Common myeloid progenitor, CD34-positive (primary cell): ENCODE measurements at regions of chr2 and their contacts with region 1.

Region 1: GRCh38 chr2:143110758-143111428 is 18.3 kb upstream of the ARHGAP15 start:
- DNase-seq: peak; percentile 81 to 90 (median 88)
- H3K4me3 ChIP-seq: peak overlapping the region in 5 of 7 experiments; percentile 21 to 64 (median 43)
- H3K27ac ChIP-seq: peak overlapping the region in 1 of 2 experiments; percentile 70
- H3K4me1 ChIP-seq: peaks cover 5 to 9% (median 7%) of the 10 kb centered on the region in 4 experiments
- H3K27me3 ChIP-seq: no peaks in the 10 kb centered on the region

Region 2: GRCh38 chr2:143034292-143035074 is 76.4 kb before region 1 on chr2:
- CTCF ChIA-PET with region 1: interaction called, 13 read pairs
- POLR2A ChIA-PET with region 1: no interaction called
- DNase-seq: peak; percentile 81 to 90 (median 89)
- H3K4me3 ChIP-seq: no peak overlapping the region
- H3K27ac ChIP-seq: no peak overlapping the region
- H3K4me1 ChIP-seq: peaks cover 0 to 6% (median 1%) of the 10 kb centered on the region in 4 experiments
- H3K27me3 ChIP-seq: no peaks in the 10 kb centered on the region

Region 3: DNA sequence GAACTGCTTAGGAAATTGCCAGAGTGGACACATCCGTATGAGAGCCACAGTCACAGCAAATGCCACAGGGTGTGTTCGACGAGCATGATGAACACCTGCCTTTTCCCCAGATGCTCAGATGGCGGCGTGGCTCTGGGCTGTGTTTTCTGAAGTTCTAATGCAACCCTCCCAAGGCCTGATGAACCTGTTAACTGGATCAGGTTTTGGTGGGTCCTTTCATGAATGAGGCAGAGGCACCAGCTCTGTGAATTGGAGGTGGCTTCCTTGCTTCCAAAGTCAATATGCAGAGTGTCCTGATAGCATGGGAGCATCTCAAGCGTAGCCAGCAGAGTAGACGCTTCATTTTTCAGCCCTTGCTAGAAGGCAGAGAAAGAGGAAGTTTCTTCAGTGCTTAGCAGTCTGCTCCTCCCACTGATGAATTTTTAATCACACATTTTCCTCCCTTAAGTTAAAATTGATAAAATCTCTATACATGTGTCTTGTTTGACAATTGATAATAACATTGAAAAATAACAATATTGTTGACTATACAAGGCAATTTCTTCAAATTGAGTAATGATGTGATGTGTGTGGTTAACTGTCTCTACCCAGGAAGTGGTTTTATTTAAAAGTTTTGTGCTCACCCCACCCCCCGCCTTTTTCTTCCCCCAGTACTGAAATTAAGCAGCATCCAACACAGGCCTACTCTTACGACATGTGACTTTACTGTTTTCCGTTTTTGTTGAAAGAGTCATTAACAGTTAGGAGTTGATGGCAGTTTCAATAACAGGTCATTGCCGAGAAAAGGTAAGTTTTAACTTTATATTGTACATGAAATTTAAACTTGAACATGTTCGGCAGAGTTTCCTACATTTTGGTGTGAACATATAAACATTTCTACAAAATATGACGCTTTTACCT is 18.0 kb after region 1 on chr2 and contains the start of gene ARHGAP15:
- CTCF ChIA-PET with region 1: interaction called, 63 read pairs
- POLR2A ChIA-PET with region 1: interaction called, 5 read pairs
- DNase-seq: peak; percentile 88 to 96 (median 94)
- H3K4me3 ChIP-seq: peak within 1 kb of the TSS in 6 of 7 experiments; percentile 62 to 97 (median 78)
- H3K27ac ChIP-seq: peak within 1 kb of the TSS; percentile 93 to 96
- H3K4me1 ChIP-seq: peaks cover 36 to 72% (median 47%) of the 10 kb centered on the region in 4 experiments
- H3K27me3 ChIP-seq: no peaks in the 10 kb centered on the region

Region 4: DNA sequence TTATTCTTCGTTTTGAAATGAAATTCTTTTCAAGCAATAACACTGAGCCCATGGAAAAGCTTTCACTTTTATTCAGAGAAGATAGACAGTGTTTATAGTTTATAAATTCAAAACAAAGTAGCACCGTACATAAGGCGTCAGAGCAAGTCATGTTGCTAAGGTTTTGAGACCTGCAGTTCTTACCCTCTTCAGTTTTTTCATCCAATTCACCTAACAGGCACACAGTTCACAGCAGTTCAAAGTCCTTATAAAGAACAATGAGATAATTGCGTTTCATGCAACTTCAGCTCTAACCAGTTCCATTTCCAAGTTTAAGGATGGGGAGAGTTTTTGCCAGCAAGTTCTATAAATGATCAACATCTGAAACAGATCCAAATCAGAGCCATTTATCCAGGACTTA is 115.0 kb after region 1 on chr2:
- CTCF ChIA-PET with region 1: interaction called, 39 read pairs
- POLR2A ChIA-PET with region 1: no interaction called
- DNase-seq: no peak
- H3K4me3 ChIP-seq: no peak overlapping the region
- H3K27ac ChIP-seq: no peak overlapping the region
- H3K4me1 ChIP-seq: no peaks in the 10 kb centered on the region
- H3K27me3 ChIP-seq: no peaks in the 10 kb centered on the region

Region 5: DNA sequence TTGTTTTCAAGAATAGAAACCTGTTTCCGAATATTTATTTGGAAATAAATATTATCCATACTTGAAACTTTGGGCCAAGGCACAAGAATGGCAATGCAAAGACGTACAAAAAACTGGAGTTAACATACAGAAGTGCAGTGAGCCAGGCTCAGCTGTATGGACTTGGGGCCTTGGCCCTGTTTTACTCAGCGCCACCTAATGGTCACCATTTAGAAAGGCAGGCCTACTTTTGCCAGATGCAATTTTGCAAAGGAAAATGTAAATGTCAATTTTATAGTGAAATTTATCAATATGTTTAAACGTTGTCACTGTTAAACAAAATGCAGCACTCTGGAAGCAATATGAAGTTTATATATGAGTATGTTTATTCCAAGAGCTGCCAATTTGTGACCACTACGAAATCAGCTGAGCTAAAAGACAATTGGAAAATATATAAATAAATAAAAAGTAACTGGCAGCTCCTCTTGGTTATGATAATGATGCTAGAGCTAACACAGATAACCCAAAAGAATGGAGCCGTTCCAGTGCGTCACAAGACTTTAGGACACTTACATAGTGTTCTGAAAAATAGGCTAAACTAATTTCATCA is 173.3 kb after region 1 on chr2:
- CTCF ChIA-PET with region 1: interaction called, 11 read pairs
- POLR2A ChIA-PET with region 1: no interaction called
- DNase-seq: peak; percentile 67 to 80 (median 75)
- H3K4me3 ChIP-seq: no peak overlapping the region
- H3K27ac ChIP-seq: no peak overlapping the region
- H3K4me1 ChIP-seq: no peaks in the 10 kb centered on the region
- H3K27me3 ChIP-seq: no peaks in the 10 kb centered on the region

Region 6: DNA sequence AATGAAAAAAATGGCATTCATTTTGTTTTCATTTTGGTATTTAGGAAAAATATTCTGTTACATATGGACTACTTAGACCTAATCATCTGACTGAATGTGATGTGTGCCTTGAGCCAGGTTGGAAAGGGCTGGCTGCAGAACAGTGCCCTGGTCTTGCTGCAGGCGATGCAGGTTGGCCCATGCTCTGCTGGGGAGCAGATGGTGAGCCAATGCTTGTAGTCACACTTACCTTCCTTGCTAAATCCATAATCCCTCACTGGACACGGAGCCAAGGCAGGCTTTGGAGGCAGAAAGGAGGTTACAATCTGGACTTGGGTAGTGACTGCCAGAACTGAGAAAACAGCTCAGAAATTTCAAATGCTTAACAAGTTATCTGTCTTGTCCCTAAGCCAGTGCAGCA is 247.1 kb after region 1 on chr2:
- CTCF ChIA-PET with region 1: no interaction called
- POLR2A ChIA-PET with region 1: no interaction called
- DNase-seq: no peak
- H3K4me3 ChIP-seq: no peak overlapping the region
- H3K27ac ChIP-seq: no peak overlapping the region
- H3K4me1 ChIP-seq: no peaks in the 10 kb centered on the region
- H3K27me3 ChIP-seq: no peaks in the 10 kb centered on the region